Activated CD4-positive, alpha-beta T cell treated with anti-CD3 and anti-CD28 coated beads for 36 hours (primary cell): ENCODE measurements at regions of chr4 and their contacts with region 1.

Region 1: GRCh38 chr4:139301113-139301820 is at the start of gene NAA15:
- DNase-seq: peak; percentile 99
- ATAC-seq: peak; percentile 89
- H3K4me3 Mint-ChIP-seq: peak within 1 kb of the TSS; percentile 98
- H3K27ac Mint-ChIP-seq: peak within 1 kb of the TSS; percentile 96
- H3K4me1 Mint-ChIP-seq: peaks cover 61% of the 10 kb centered on the region
- H3K27me3 Mint-ChIP-seq: no peaks in the 10 kb centered on the region
- total RNA-seq, gene NAA15: 64.3 to 113 TPM

Region 2: GRCh38 chr4:138967313-138967712 is 334.0 kb before region 1 on chr4:
- CTCF ChIA-PET with region 1: no interaction called
- POLR2A ChIA-PET with region 1: no interaction called
- intact Hi-C with region 1: no loop called
- DNase-seq: no peak
- ATAC-seq: no peak
- H3K4me3 Mint-ChIP-seq: no peak overlapping the region
- H3K27ac Mint-ChIP-seq: no peak overlapping the region
- H3K4me1 Mint-ChIP-seq: no peaks in the 10 kb centered on the region
- H3K27me3 Mint-ChIP-seq: no peaks in the 10 kb centered on the region

Region 3: GRCh38 chr4:139083956-139084803 is 217.1 kb before region 1 on chr4:
- CTCF ChIA-PET with region 1: interaction called, 3 read pairs
- POLR2A ChIA-PET with region 1: interaction called, 7 read pairs
- intact Hi-C with region 1: loop called (anchors 1 to 2 kb)
- DNase-seq: peak; percentile 92
- ATAC-seq: peak; percentile 64
- H3K4me3 Mint-ChIP-seq: peak overlapping the region; percentile 100
- H3K27ac Mint-ChIP-seq: peak overlapping the region; percentile 99
- H3K4me1 Mint-ChIP-seq: peaks cover 30% of the 10 kb centered on the region
- H3K27me3 Mint-ChIP-seq: no peaks in the 10 kb centered on the region

Region 4: DNA sequence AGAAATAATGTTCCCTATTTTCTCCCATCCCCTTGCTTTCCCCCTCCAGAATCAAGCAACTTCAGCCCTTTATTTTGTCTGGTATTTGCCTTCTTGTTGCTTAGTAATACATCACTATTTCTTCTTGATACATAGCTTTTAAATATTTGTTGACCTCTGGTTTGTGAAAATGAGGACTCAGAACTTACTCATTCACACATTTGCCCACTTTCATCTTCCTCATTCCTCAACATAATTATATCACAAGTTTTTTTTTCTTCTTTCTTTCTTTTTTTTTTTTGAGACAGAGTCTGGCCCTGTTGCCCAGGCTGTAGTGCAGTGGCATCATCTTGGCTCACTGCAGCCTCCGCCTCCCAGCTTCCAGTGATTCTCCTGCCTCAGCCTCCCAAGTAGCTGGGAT is 29.9 kb after region 1 on chr4:
- CTCF ChIA-PET with region 1: interaction called, 12 read pairs
- POLR2A ChIA-PET with region 1: interaction called, 11 read pairs
- intact Hi-C with region 1: loop called (anchors 2 to 5 kb)
- DNase-seq: no peak
- ATAC-seq: no peak
- H3K4me3 Mint-ChIP-seq: no peak overlapping the region
- H3K27ac Mint-ChIP-seq: peak overlapping the region; percentile 69
- H3K4me1 Mint-ChIP-seq: peaks cover 48% of the 10 kb centered on the region
- H3K27me3 Mint-ChIP-seq: no peaks in the 10 kb centered on the region

Region 5: DNA sequence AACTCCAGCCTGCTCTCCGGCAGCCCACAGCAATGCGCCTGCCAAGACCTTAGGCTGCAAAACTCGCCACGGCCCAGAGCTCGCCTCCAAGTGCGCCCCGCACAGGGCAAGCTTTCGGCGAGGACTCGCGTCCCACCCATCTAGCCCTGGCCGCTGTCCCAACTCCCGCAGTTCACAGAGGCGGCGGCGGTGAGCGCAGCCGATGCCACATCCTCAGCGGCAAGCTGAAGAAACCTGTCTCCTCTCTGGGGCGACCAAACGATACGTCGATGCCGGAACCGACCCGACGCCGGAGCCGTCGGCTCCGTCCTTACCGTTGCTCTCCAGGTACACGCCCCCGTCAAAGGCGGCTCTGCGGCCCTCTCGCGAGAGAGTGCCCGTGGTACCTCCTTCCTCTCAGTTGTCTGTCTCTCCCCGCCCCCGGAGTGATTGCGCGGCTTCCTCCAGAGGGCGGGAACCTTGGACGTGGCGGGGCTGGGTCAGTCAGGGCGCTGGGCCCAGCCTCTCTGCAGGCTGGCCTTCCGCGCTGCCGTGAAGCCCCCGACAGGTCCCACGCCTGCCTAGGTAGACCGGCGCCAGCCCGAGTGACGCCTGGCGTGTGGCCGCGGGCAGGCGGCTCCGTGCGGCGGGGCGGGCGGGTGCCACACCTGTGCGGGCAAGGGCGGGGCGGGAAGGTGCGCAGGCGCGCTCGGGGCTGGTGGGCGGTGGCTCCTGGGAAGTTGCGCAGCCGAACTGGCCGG is 152.3 kb after region 1 on chr4:
- CTCF ChIA-PET with region 1: interaction called, 5 read pairs
- POLR2A ChIA-PET with region 1: no interaction called
- intact Hi-C with region 1: loop called (anchors 1 to 2 kb)
- DNase-seq: peak; percentile 99
- ATAC-seq: peak; percentile 90
- H3K4me3 Mint-ChIP-seq: peak overlapping the region; percentile 91
- H3K27ac Mint-ChIP-seq: peak overlapping the region; percentile 98
- H3K4me1 Mint-ChIP-seq: peaks cover 48% of the 10 kb centered on the region
- H3K27me3 Mint-ChIP-seq: no peaks in the 10 kb centered on the region

Region 6: GRCh38 chr4:139794158-139794954 is 493.1 kb after region 1 on chr4:
- CTCF ChIA-PET with region 1: no interaction called
- POLR2A ChIA-PET with region 1: no interaction called
- intact Hi-C with region 1: no loop called
- DNase-seq: no peak
- ATAC-seq: no peak
- H3K4me3 Mint-ChIP-seq: no peak overlapping the region
- H3K27ac Mint-ChIP-seq: no peak overlapping the region
- H3K4me1 Mint-ChIP-seq: no peaks in the 10 kb centered on the region
- H3K27me3 Mint-ChIP-seq: peaks cover 2% of the 10 kb centered on the region